Activated T-helper 1 cell treated with anti-CD3 and anti-CD28 coated beads, Interleukin-12 subunit alpha, Interleukin-12 subunit beta, Interleukin-2, Interleukin-4 antibody, amounts not matched to agents 30 ng/mL and 10 ng/mL and 1 ng/mL, durations not matched to agents 14 hours and 24 hours and 36 hours (primary cell): ENCODE measurements at regions of chr1 and their contacts with region 1.

Region 1: DNA sequence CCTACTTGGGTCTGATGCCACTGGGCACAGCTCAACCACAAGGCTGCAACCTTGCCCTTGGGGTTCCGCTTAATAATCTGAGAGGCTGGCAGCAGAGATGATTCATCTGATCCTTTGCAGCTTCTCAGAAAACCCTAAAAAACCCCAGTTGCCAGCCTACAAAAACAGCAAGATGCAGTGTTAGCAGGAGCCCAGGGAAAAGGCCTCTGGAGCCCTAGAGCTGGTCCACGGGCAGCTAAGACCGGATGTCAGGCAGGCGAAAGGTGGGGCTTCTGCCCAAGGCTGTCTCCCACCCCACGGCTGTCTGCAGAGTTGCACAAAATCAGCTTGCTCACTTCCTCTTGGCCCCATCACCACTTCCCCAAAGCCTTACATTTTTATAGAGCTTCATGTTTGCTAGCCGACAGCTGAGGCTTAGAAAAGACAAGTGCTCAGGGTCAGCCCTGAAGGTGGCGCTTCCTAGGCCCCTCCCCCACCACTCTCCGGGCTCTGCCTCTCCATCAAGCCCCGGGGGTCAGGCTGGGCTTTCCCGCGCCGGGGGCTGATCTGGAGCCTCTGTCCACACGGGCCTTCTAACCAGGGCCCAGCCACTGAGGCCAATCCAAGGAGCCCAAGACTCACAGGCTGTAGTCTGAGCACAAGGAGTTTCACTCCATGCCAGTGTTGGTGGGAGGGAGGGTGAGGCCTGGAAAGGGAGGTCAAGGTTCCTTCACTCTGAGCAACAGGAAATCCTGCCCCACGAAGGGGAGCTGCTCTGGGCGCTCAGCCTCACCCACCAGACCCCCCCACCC is 4.2 kb upstream of the ADORA3 start:
- DNase-seq: peak; percentile 52
- H3K4me3 Mint-ChIP-seq: peak overlapping the region; percentile 72
- H3K27ac Mint-ChIP-seq: peak overlapping the region; percentile 83
- H3K4me1 Mint-ChIP-seq: peaks cover 58% of the 10 kb centered on the region
- H3K27me3 Mint-ChIP-seq: no peaks in the 10 kb centered on the region

Region 2: GRCh38 chr1:111496398-111496797 is 11.2 kb before region 1 on chr1:
- intact Hi-C with region 1: loop called (anchors 1 kb)
- DNase-seq: no peak
- H3K4me3 Mint-ChIP-seq: peak overlapping the region; percentile 5
- H3K27ac Mint-ChIP-seq: peak overlapping the region; percentile 54
- H3K4me1 Mint-ChIP-seq: peaks cover 20% of the 10 kb centered on the region
- H3K27me3 Mint-ChIP-seq: peaks cover 4% of the 10 kb centered on the region

Region 3: GRCh38 chr1:111619635-111620440 is 112.2 kb after region 1 on chr1 and contains the start of gene RAP1A:
- intact Hi-C with region 1: loop called (anchors 1 kb)
- DNase-seq: peak; percentile 88
- H3K4me3 Mint-ChIP-seq: peak within 1 kb of the TSS; percentile 99
- H3K27ac Mint-ChIP-seq: peak within 1 kb of the TSS; percentile 93
- H3K4me1 Mint-ChIP-seq: peaks cover 76% of the 10 kb centered on the region
- H3K27me3 Mint-ChIP-seq: no peaks in the 10 kb centered on the region
- total RNA-seq, gene RAP1A: 326 and 348 TPM in 2 replicates

Region 4: DNA sequence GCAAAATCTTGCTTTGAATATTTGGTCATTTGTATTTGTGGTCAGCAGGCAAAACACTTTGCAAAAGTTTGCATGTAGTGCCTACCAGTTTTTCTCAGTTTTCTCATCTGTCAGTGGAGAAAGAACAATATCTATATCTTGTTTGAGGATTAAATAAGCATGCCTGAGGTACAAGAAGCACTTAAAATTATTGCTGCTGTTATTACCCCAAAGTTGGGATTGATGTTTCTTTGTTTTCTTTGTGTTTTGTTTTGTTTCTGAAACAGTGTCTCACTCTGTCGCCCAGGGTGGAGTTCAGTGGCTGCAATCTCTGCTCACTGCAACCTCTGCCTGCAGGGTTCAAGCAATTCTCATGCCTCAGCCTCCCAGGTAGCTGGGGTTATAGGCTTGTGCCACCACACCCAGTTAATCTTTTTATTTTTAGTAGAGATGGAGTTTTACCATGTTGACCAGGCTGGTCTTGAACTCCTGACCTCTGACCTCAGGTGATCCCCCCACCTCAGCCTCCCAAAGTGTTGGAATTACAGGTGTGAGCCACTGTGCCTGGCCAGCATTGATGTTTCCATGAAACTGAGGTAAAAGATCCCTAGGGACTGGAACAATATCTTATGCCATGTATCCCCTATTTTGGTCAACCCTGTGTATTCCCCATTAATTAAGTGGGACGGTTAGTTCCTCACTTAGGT is 127.9 kb after region 1 on chr1:
- intact Hi-C with region 1: no loop called
- DNase-seq: no peak
- H3K4me3 Mint-ChIP-seq: no peak overlapping the region
- H3K27ac Mint-ChIP-seq: no peak overlapping the region
- H3K4me1 Mint-ChIP-seq: peaks cover 70% of the 10 kb centered on the region
- H3K27me3 Mint-ChIP-seq: no peaks in the 10 kb centered on the region

Region 5: DNA sequence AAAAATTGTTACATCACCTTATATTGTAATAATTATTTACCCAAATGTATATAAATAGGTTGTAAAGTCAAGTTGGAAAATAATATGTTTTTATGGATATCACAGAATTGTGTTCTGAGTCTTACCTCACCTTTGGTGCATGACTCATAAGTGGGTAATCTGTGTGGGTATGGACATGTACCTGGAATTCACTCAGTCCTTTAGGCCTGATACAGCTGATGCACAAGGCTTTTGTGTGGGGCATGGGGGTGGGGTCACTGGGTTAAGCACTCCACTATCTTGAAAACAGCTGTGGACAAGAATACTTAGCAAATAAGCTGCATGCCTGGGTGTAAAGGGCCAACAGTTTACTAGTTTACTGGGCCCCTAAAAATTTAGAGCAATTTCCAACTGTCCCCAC is 197.2 kb after region 1 on chr1:
- intact Hi-C with region 1: loop called (anchors 2 kb)
- DNase-seq: no peak
- H3K4me3 Mint-ChIP-seq: no peak overlapping the region
- H3K27ac Mint-ChIP-seq: peak overlapping the region; percentile 32
- H3K4me1 Mint-ChIP-seq: peaks cover 36% of the 10 kb centered on the region
- H3K27me3 Mint-ChIP-seq: no peaks in the 10 kb centered on the region

Region 6: DNA sequence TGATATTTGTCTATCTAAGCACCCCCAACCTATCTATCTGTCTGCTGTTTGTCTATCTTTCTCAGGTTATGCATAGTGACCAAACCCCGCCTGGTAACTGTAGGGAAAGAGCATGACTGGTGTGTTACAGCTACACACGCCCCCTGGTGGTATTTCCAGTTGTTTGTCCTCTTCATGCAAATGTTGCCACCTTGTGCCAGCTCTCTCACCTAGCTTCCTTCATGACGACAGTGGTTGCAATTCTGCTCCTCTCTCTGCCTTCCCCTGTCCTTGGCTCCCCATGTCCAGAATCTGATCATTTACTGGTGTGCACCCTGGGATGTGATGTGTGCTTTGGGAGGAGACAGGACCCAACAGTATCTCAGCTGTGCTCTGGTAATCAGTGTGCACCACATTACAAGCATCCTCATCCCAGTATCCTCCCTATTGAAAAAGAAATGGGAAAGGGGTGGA is 239.7 kb after region 1 on chr1:
- intact Hi-C with region 1: loop called (anchors 1 kb)
- DNase-seq: peak; percentile 70
- H3K4me3 Mint-ChIP-seq: no peak overlapping the region
- H3K27ac Mint-ChIP-seq: no peak overlapping the region
- H3K4me1 Mint-ChIP-seq: peaks cover 14% of the 10 kb centered on the region
- H3K27me3 Mint-ChIP-seq: peaks cover 28% of the 10 kb centered on the region